K562 (cell line): ENCODE measurements at regions of chr22 and their contacts with region 1.

Region 1: GRCh38 chr22:36065775-36066559 is 37.3 kb upstream of the RBFOX2 start:
- DNase-seq: peak; percentile 79 to 84 (median 83)
- ATAC-seq: peak; percentile 97
- H3K4me3 ChIP-seq: peak overlapping the region; percentile 47
- H3K27ac ChIP-seq: peak overlapping the region; percentile 91
- H3K4me1 ChIP-seq: peaks cover 8 to 11% of the 10 kb centered on the region in 2 experiments; a peak in 4 of 5 replicates
- H3K27me3 ChIP-seq: no peaks in the 10 kb centered on the region
- CTCF ChIP-seq: peak; percentile 77 to 99 (median 94)
- EP300 ChIP-seq: no peak
- POLR2A ChIP-seq: peak; percentile 57; the same call in 1 of the 2 replicates
- RAD21 ChIP-seq: peak; percentile 84 to 86

Region 2: DNA sequence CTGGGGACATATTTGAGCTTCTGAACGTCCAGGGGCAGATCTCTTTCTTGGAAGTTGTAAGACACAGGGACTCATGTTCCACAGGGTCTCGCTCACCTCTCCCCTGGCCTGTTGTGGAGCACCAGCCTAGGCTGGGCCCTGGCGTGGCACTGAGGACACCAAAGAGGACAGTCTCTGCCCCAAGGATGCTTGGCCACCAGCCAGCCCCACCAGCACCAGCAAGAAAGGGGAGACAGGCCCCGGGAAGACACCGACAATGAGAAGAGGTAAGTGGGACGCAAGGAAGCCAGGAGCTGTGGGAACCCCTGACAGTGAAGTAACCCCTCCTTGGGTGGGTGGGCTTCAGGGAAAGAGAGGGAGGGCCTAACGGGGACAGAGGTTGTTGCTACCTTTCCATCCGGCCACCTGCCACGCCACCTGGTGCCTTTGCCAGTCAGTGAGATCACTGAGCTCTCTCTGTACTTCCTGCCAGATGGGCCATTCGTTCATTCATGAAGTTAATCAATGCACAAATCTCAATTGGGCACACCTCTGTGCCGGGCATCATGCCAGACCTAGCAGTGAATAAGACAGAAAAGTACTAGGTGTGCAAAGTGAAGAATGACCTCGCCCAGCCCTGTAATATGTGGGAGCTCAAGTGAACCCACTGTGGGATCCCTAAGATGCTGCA is 337.2 kb before region 1 on chr22:
- CTCF ChIA-PET with region 1: no interaction called
- POLR2A ChIA-PET with region 1: no interaction called
- in situ Hi-C with region 1: no loop called
- intact Hi-C with region 1: no loop called
- DNase-seq: no peak
- ATAC-seq: no peak
- H3K4me3 ChIP-seq: no peak overlapping the region
- H3K27ac ChIP-seq: no peak overlapping the region
- H3K4me1 ChIP-seq: peaks cover 6 to 9% of the 10 kb centered on the region in 2 experiments
- H3K27me3 ChIP-seq: peaks cover 10 to 18% of the 10 kb centered on the region in 2 experiments; a peak in 4 of 5 replicates
- CTCF ChIP-seq: no peak
- EP300 ChIP-seq: no peak
- POLR2A ChIP-seq: no peak
- RAD21 ChIP-seq: no peak

Region 3: GRCh38 chr22:35930933-35931332 is 135.0 kb before region 1 on chr22:
- CTCF ChIA-PET with region 1: interaction called, 30 read pairs
- POLR2A ChIA-PET with region 1: no interaction called
- in situ Hi-C with region 1: loop called (anchors 5 kb)
- intact Hi-C with region 1: loop called (anchors 1 kb)
- DNase-seq: peak; percentile 19 to 64 (median 34)
- ATAC-seq: peak; percentile 93
- H3K4me3 ChIP-seq: no peak overlapping the region
- H3K27ac ChIP-seq: no peak overlapping the region
- H3K4me1 ChIP-seq: peaks cover 0 to 6% of the 10 kb centered on the region in 2 experiments; a peak in 1 of 5 replicates
- H3K27me3 ChIP-seq: no peaks in the 10 kb centered on the region
- CTCF ChIP-seq: peak; percentile 41 to 68 (median 51); a peak in 4 of 6 replicates
- EP300 ChIP-seq: no peak
- POLR2A ChIP-seq: no peak
- RAD21 ChIP-seq: peak; percentile 77 to 88

Region 4: DNA sequence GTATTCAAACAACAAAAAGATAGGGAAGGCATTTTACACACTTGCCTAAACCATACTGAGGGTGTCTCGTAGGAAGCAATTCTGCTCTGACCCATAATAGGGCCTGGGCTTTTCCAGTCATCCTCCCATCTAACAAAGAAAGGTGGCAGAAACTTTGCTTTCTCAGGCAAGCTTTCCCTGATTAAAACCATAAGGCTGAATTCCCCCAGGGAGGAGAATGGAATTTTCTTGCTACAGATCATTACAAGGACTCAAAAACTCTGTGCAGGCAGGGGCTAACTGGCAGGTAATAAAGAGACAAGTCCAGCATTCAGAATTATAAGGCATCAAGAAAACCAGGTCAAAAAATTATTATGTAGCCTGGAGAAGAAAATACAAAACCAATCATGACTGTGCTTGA is 127.7 kb before region 1 on chr22:
- CTCF ChIA-PET with region 1: no interaction called
- POLR2A ChIA-PET with region 1: no interaction called
- in situ Hi-C with region 1: loop called (anchors 5 kb)
- intact Hi-C with region 1: no loop called
- DNase-seq: no peak
- ATAC-seq: no peak
- H3K4me3 ChIP-seq: no peak overlapping the region
- H3K27ac ChIP-seq: no peak overlapping the region
- H3K4me1 ChIP-seq: peaks cover 0 to 6% of the 10 kb centered on the region in 2 experiments; a peak in 2 of 5 replicates
- H3K27me3 ChIP-seq: no peaks in the 10 kb centered on the region
- CTCF ChIP-seq: no peak
- EP300 ChIP-seq: no peak
- POLR2A ChIP-seq: no peak
- RAD21 ChIP-seq: no peak

Region 5: GRCh38 chr22:36009085-36009484 is 56.9 kb before region 1 on chr22:
- CTCF ChIA-PET with region 1: no interaction called
- POLR2A ChIA-PET with region 1: no interaction called
- in situ Hi-C with region 1: no loop called
- intact Hi-C with region 1: loop called (anchors 10 kb)
- DNase-seq: no peak
- ATAC-seq: peak; percentile 33
- H3K4me3 ChIP-seq: no peak overlapping the region
- H3K27ac ChIP-seq: peak overlapping the region; percentile 40; the same call in 1 of the 3 replicates
- H3K4me1 ChIP-seq: peaks cover 11 to 26% of the 10 kb centered on the region in 2 experiments; a peak in 3 of 5 replicates
- H3K27me3 ChIP-seq: no peaks in the 10 kb centered on the region
- CTCF ChIP-seq: no peak
- EP300 ChIP-seq: no peak
- POLR2A ChIP-seq: no peak
- RAD21 ChIP-seq: no peak

Region 6: GRCh38 chr22:36055376-36056295 is 10.3 kb before region 1 on chr22:
- CTCF ChIA-PET with region 1: no interaction called
- POLR2A ChIA-PET with region 1: interaction called, 12 read pairs
- in situ Hi-C with region 1: no loop called
- intact Hi-C with region 1: no loop called
- DNase-seq: no peak
- ATAC-seq: no peak
- H3K4me3 ChIP-seq: no peak overlapping the region
- H3K27ac ChIP-seq: no peak overlapping the region
- H3K4me1 ChIP-seq: peaks cover 0 to 15% of the 10 kb centered on the region in 2 experiments; a peak in 3 of 5 replicates
- H3K27me3 ChIP-seq: no peaks in the 10 kb centered on the region
- CTCF ChIP-seq: no peak
- EP300 ChIP-seq: no peak
- POLR2A ChIP-seq: no peak
- RAD21 ChIP-seq: no peak

Region 7: DNA sequence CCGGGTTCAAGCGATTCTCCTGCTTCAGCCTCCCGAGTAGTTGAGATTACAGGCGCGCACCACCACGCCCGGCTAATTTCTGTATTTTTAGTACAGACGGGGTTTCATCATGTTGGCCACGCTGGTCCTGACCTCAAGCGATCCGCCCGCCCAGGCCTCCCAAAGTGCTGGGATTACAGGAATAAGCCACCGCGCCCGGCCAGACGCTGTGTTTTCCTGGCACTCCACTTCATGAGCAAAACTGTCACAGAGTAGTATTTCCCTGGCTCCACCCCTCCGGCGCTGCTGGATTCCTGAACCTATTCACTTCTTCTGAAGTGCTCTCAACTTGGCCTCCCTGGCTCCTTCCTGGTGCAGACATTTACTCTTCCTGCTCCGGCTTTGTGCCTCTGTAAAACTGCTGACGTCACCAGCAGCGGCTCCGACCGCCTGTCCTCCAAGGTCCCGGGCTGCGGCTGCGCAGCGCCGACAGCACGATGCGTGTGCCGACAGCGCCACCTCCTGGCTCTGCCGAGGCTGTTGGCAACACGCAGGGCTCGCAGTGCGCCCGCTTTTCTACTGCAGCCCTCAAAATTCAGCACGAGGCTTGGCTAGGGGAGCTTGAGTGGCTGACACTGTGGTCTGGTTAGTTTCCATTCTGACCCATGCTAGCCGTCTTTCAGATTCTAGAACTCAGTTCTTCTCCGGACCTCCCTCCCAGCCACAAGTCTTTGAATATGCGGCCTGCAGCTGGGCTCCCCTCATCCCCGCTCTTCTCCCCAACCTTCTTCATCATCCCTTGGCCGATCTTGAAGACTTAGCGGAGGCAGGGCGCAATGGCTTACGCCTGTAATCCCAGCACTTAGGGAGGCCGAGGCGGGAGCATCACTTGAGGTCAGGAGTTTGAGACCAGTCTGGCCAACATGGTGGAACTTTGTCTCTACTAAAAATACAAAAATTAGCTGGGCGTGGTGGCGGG is 58.0 kb after region 1 on chr22:
- CTCF ChIA-PET with region 1: interaction called, 19 read pairs
- POLR2A ChIA-PET with region 1: no interaction called
- in situ Hi-C with region 1: no loop called
- intact Hi-C with region 1: loop called (anchors 2 kb)
- DNase-seq: peak; percentile 80 to 93 (median 88)
- ATAC-seq: peak; percentile 98
- H3K4me3 ChIP-seq: no peak overlapping the region
- H3K27ac ChIP-seq: peak overlapping the region; percentile 73
- H3K4me1 ChIP-seq: peaks cover 2 to 9% of the 10 kb centered on the region in 2 experiments; a peak in 4 of 5 replicates
- H3K27me3 ChIP-seq: peaks cover 0 to 14% of the 10 kb centered on the region in 2 experiments; a peak in 2 of 5 replicates
- CTCF ChIP-seq: peak; percentile 93 to 96 (median 94)
- EP300 ChIP-seq: no peak
- POLR2A ChIP-seq: no peak
- RAD21 ChIP-seq: peak; percentile 97 to 98

Region 8: DNA sequence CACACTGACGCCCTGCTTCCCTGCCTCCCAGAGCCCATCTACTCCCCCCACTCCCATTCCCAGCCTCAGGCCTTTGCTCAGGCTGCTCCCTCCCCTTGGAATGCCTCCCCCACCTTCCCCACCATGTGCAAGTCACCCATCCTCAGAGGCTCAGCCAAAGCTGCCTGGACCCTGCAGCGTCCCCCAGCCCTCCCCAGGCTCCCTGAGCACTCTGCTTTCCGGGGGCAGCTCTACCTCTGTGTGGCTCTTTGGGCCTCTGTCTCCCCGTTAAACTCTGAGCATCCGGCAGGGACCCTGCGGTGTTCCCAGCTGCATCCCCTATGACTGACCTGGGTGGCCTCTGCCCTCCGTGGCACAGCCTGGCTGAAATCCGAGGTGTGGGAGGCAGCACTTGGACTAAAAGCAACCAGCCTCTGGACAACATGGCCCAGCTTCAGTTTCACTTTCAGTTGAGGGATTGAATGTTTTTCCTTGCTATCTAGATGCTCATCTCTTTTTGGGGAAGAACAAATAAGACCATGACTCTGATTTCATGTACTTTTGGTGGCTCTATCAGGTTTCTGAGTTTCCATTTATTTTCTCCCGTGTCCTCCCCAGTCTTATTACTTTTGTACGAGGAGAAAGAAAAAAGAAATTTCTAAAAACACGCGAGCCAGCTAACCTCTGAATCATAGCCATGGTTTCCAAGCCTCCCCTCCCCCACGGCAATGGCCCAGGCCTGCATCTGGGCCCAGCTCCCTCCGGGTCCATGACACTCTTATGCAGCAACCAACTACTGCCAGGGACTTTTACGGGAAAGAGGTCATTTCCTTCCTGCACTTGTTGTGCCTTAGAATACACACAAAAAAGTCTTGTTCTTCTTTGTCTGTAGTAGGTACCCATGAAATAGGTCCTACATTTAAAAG is 90.8 kb after region 1 on chr22:
- CTCF ChIA-PET with region 1: no interaction called
- POLR2A ChIA-PET with region 1: no interaction called
- in situ Hi-C with region 1: no loop called
- intact Hi-C with region 1: no loop called
- DNase-seq: peak; percentile 29 to 55 (median 52)
- ATAC-seq: peak; percentile 70
- H3K4me3 ChIP-seq: peak overlapping the region; percentile 20; the same call in 1 of the 2 replicates
- H3K27ac ChIP-seq: peak overlapping the region; percentile 62; the same call in 2 of the 3 replicates
- H3K4me1 ChIP-seq: peaks cover 13 to 16% of the 10 kb centered on the region in 2 experiments
- H3K27me3 ChIP-seq: no peaks in the 10 kb centered on the region
- CTCF ChIP-seq: no peak
- EP300 ChIP-seq: no peak
- POLR2A ChIP-seq: no peak
- RAD21 ChIP-seq: no peak

Region 9: GRCh38 chr22:36201630-36202319 is 135.8 kb after region 1 on chr22 and contains the start of gene APOL4:
- CTCF ChIA-PET with region 1: no interaction called
- POLR2A ChIA-PET with region 1: no interaction called
- in situ Hi-C with region 1: no loop called
- intact Hi-C with region 1: no loop called
- DNase-seq: peak; percentile 58 to 93 (median 71)
- ATAC-seq: peak; percentile 81
- H3K4me3 ChIP-seq: peak within 1 kb of the TSS; percentile 35
- H3K27ac ChIP-seq: peak within 1 kb of the TSS; percentile 80
- H3K4me1 ChIP-seq: peaks cover 40 to 42% of the 10 kb centered on the region in 2 experiments; a peak in 4 of 5 replicates
- H3K27me3 ChIP-seq: no peaks in the 10 kb centered on the region
- CTCF ChIP-seq: peak in 1 of 3 experiments; percentile 35; a peak in 1 of 6 replicates
- EP300 ChIP-seq: peak; percentile 79
- POLR2A ChIP-seq: peak; percentile 71
- RAD21 ChIP-seq: no peak; a peak in 1 of 4 replicates
- polyA plus RNA-seq, gene APOL4: 8.9 to 15.0 TPM